HepG2 (cell line): ENCODE measurements at regions of chr3 and their contacts with region 1.

Region 1: DNA sequence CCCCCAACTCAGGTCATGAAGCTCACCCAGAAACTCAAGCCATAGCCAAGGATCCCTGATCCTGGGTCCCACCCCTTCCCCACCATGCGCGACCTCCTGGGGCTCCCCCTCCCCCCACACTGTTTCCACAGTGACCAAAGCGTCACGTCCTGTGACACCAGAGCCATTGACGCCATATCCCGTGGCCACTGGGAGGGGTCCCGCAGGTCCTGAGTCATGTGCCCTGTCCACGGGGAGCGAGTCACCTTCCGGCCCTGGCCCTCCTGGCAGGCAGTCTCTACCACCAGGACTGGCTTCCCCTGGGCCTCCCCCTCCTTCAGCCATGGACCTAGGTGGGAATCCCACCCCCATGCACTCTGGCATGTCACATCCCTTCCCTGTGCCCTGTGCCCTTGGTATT is 15.6 kb downstream of the SEMA3F start:
- DNase-seq: peak; percentile 48
- ATAC-seq: no peak
- H3K4me3 ChIP-seq: peak overlapping the region in 1 of 3 experiments; percentile 29; a peak in 1 of 6 replicates
- H3K27ac ChIP-seq: peak overlapping the region; percentile 72
- H3K4me1 ChIP-seq: peaks cover 79% of the 10 kb centered on the region
- H3K27me3 ChIP-seq: no peaks in the 10 kb centered on the region
- CTCF ChIP-seq: no peak
- EP300 ChIP-seq: no peak
- POLR2A ChIP-seq: no peak
- RAD21 ChIP-seq: no peak

Region 2: GRCh38 chr3:49593041-49593440 is 577.6 kb before region 1 on chr3:
- CTCF ChIA-PET with region 1: no interaction called
- POLR2A ChIA-PET with region 1: no interaction called
- in situ Hi-C with region 1: no loop called
- intact Hi-C with region 1: no loop called
- DNase-seq: no peak
- ATAC-seq: no peak
- H3K4me3 ChIP-seq: no peak overlapping the region
- H3K27ac ChIP-seq: no peak overlapping the region
- H3K4me1 ChIP-seq: peaks cover 12% of the 10 kb centered on the region; the same call in 1 of the 2 replicates
- H3K27me3 ChIP-seq: no peaks in the 10 kb centered on the region
- CTCF ChIP-seq: no peak
- EP300 ChIP-seq: no peak
- POLR2A ChIP-seq: no peak
- RAD21 ChIP-seq: no peak

Region 3: DNA sequence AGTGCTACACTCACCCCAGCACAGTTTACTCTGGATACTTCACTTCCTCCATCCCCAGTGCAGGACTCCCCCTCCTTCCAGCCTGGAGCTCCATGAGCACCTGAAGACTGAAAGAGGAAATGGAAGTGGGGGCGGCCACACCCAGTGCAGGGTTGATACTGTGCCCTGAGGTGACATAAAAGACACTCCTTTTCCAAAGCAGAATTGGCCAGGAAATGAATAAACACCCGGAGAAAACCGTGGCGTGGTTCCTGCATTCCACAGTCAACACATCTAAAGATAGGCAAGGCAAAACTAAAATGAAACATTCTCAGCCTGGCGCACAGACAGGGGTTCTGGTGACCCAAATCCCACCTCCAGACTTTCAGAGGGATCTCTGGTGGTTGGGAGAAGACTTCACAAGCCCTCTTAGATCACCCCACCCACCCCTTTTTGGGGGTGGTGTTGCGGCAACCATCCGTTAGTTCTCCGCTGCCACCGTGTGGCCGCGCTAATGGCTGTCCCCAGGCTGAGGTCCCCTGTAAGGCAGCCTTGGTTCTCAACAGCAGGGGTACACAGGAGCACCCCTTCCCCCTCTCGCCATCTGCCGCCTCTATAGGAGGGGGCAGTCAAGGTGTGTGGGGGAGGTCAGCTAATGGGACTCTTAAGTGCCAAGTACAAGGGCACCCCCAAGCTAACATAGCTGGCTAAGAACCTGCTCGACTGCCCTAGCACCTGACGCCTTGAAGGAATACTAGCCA is 264.5 kb before region 1 on chr3:
- CTCF ChIA-PET with region 1: no interaction called
- POLR2A ChIA-PET with region 1: no interaction called
- in situ Hi-C with region 1: no loop called
- intact Hi-C with region 1: no loop called
- DNase-seq: peak; percentile 33
- ATAC-seq: peak; percentile 75
- H3K4me3 ChIP-seq: peak overlapping the region; percentile 8 to 40 (median 39); a peak in 5 of 6 replicates
- H3K27ac ChIP-seq: no peak overlapping the region
- H3K4me1 ChIP-seq: peaks cover 24% of the 10 kb centered on the region
- H3K27me3 ChIP-seq: no peaks in the 10 kb centered on the region
- CTCF ChIP-seq: peak; percentile 91
- EP300 ChIP-seq: no peak
- POLR2A ChIP-seq: no peak
- RAD21 ChIP-seq: peak; percentile 89

Region 4: GRCh38 chr3:50121416-50122032 is 49.2 kb before region 1 on chr3:
- CTCF ChIA-PET with region 1: interaction called, 3 read pairs
- POLR2A ChIA-PET with region 1: interaction called, 3 read pairs
- in situ Hi-C with region 1: no loop called
- intact Hi-C with region 1: loop called (anchors 5 kb)
- DNase-seq: peak; percentile 70
- ATAC-seq: peak; percentile 80
- H3K4me3 ChIP-seq: no peak overlapping the region
- H3K27ac ChIP-seq: no peak overlapping the region
- H3K4me1 ChIP-seq: peaks cover 16% of the 10 kb centered on the region
- H3K27me3 ChIP-seq: peaks cover 0 to 6% of the 10 kb centered on the region in 2 experiments; a peak in 2 of 5 replicates
- CTCF ChIP-seq: peak; percentile 95
- EP300 ChIP-seq: no peak
- POLR2A ChIP-seq: peak in 1 of 2 experiments; percentile 33; a peak in 1 of 4 replicates
- RAD21 ChIP-seq: peak; percentile 93

Region 5: DNA sequence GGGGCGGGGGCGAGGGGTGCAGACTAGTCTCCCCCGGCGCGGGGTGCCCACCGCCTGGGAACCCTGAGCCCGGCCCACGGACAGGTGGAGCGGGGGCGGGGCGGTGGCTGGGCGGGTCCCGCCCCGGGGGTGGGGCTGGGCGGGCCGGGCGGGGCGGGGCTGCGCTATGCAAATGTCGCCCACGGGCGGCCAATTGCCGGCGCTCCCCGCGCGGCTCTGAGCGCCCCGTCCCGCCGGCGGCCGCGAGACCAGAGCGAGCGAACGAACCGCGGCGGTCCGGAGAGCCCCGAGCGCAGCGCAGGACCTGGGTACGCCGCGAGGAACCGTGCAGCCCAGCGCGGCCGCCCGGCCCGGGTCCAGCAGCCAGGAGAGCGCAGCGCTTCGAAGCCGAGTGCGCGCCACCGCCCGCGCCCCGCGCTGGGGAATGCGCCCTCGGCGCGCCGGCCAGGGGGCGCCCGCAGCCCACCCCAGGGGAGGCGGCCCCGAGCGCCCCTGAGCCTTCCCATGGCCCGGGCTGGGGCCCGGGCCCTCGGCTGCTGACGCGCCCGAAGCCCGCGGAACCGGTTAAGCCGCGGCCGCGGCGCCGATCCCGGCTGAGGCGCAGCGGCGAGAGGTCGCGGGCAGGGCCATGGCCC is 15.7 kb before region 1 on chr3 and contains the start of gene SEMA3F:
- CTCF ChIA-PET with region 1: interaction called, 3 read pairs
- POLR2A ChIA-PET with region 1: interaction called, 23 read pairs
- in situ Hi-C with region 1: no loop called
- intact Hi-C with region 1: no loop called
- DNase-seq: peak; percentile 32
- ATAC-seq: peak; percentile 76
- H3K4me3 ChIP-seq: peak within 1 kb of the TSS; percentile 67 to 84 (median 81)
- H3K27ac ChIP-seq: no peak within 1 kb of the TSS
- H3K4me1 ChIP-seq: peaks cover 75% of the 10 kb centered on the region
- H3K27me3 ChIP-seq: peaks cover 0 to 15% of the 10 kb centered on the region in 2 experiments; a peak in 2 of 5 replicates
- CTCF ChIP-seq: peak; percentile 53; the same call in 1 of the 2 replicates
- EP300 ChIP-seq: no peak
- POLR2A ChIP-seq: 0 out of 4 replicates have a peak, but pooled peaks of 1 of the 2 experiments have one; percentile 32
- RAD21 ChIP-seq: peak; percentile 97
- total RNA-seq, gene SEMA3F: 3.6 and 7.6 TPM in 2 replicates